Stomach (tissue), 19 donors: ENCODE measurements at regions of chr10 and their contacts with region 1.

Region 1: GRCh38 chr10:43453266-43453831 is 16.4 kb downstream of the ZNF487 start:
- DNase-seq: no peak
- H3K4me3 ChIP-seq: no peak overlapping the region
- H3K27ac ChIP-seq: peak overlapping the region in 2 of 5 donors; percentile 14 to 44
- H3K4me1 ChIP-seq: peaks cover 15 to 35% (median 20%) of the 10 kb centered on the region in 4 donors
- H3K27me3 ChIP-seq: no peaks in the 10 kb centered on the region
- CTCF ChIP-seq: no peak
- EP300 ChIP-seq: no peak
- POLR2A ChIP-seq: no peak

Region 2: GRCh38 chr10:43390759-43391158 is 62.6 kb before region 1 on chr10:
- intact Hi-C with region 1: loop called (anchors 5 kb)
- DNase-seq: peak in 1 of 2 donors; percentile 59
- H3K4me3 ChIP-seq: no peak overlapping the region
- H3K27ac ChIP-seq: peak overlapping the region in 4 of 5 donors; percentile 6 to 45 (median 8)
- H3K4me1 ChIP-seq: peaks cover 23 to 71% (median 55%) of the 10 kb centered on the region in 4 donors
- H3K27me3 ChIP-seq: no peaks in the 10 kb centered on the region
- CTCF ChIP-seq: peak in 4 of 7 experiments; percentile 8 to 31 (median 18)
- EP300 ChIP-seq: no peak
- POLR2A ChIP-seq: no peak